AG04449 (cell line): ENCODE measurements at regions of chr3 and their contacts with region 1.

Region 1: GRCh38 chr3:190701096-190701532 is 161.4 kb downstream of the GMNC start:
- DNase-seq: no peak
- H3K4me3 ChIP-seq: no peak overlapping the region
- CTCF ChIP-seq: peak; percentile 58

Region 2: GRCh38 chr3:190443257-190443656 is 257.9 kb before region 1 on chr3:
- CTCF ChIA-PET with region 1: interaction called, 22 read pairs
- POLR2A ChIA-PET with region 1: no interaction called
- DNase-seq: no peak
- H3K4me3 ChIP-seq: no peak overlapping the region
- CTCF ChIP-seq: peak; percentile 32

Region 3: DNA sequence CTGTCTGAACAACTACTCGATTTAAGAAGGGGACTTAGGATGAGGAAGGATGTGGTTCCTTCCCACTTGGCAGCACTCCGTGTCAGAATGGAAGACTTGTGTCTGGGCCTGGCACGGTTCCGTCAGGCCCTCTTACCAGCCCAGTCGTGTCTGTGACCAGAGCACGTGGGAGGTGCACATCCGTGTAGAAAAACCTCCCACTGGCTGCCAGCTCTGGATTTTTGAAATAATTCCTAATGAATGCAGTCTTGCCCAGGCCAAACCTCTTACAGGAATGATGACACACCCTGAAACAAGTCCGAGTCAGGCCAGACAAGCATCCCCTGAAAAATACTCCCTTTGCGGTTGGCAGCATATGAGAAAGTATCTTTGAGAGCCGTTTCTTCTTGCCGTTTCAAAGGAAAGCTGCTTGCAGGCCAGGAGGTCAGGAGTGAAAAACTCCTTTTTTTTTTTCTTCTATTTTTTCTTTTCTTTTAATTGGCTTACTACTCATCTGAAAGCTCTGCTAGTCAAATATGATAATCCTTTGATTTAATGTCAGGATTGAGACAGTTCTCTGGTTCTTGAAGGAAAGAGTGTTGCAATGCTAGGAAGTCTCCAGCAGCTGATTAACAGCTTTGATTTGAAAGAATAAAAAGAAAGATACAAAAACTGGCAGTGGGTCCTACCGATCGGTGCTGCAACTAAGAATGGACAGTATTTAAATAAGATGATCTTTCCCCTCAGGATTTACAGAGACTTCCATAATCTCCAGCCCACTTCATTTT is 167.4 kb before region 1 on chr3:
- CTCF ChIA-PET with region 1: interaction called, 10 read pairs
- POLR2A ChIA-PET with region 1: no interaction called
- DNase-seq: peak; percentile 77
- H3K4me3 ChIP-seq: no peak overlapping the region
- CTCF ChIP-seq: no peak

Region 4: DNA sequence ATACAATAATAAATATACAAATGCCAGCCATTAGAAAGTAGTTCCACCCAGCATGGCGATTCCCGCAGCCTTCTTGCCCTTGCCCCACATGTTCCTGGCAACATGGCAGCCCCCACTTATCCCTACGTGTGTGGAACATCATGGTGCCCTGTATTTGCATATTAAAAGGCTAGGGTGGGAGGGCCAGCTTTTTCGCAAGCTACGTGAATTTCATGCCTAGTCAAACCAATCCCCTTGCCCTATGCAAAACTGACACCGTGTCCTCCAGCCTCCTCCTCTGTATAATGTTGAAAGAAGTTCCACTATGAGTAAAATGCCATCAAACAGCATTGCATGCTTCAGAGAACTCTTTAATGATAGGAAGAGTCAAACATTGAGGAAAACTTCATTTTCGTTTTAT is 16.4 kb before region 1 on chr3:
- CTCF ChIA-PET with region 1: interaction called, 26 read pairs
- POLR2A ChIA-PET with region 1: no interaction called
- DNase-seq: no peak
- H3K4me3 ChIP-seq: no peak overlapping the region
- CTCF ChIP-seq: no peak

Region 5: GRCh38 chr3:190911382-190911781 is 210.3 kb after region 1 on chr3:
- CTCF ChIA-PET with region 1: no interaction called
- POLR2A ChIA-PET with region 1: no interaction called
- DNase-seq: no peak
- H3K4me3 ChIP-seq: no peak overlapping the region
- CTCF ChIP-seq: no peak

Region 6: GRCh38 chr3:191051037-191051436 is 349.9 kb after region 1 on chr3:
- CTCF ChIA-PET with region 1: interaction called, 112 read pairs
- POLR2A ChIA-PET with region 1: no interaction called
- DNase-seq: no peak
- H3K4me3 ChIP-seq: no peak overlapping the region
- CTCF ChIP-seq: peak; percentile 8